Endothelial cell of umbilical vein (primary cell): ENCODE measurements at regions of chr5 and their contacts with region 1.

Region 1: GRCh38 chr5:75717082-75717922 is at the start of gene POC5:
- DNase-seq: peak; percentile 98
- H3K4me3 ChIP-seq: peak within 1 kb of the TSS; percentile 49 to 88 (median 86)
- H3K27ac ChIP-seq: peak within 1 kb of the TSS; percentile 53
- H3K4me1 ChIP-seq: peaks cover 7% of the 10 kb centered on the region
- H3K27me3 ChIP-seq: peaks cover 8 to 9% of the 10 kb centered on the region in 2 experiments
- CTCF ChIP-seq: no peak
- POLR2A ChIP-seq: no peak
- total RNA-seq, gene POC5: 7.8 and 8.3 TPM in 2 replicates

Region 2: GRCh38 chr5:75524071-75524470 is 193.2 kb before region 1 on chr5:
- CTCF ChIA-PET with region 1: no interaction called
- POLR2A ChIA-PET with region 1: no interaction called
- dilution Hi-C with region 1: no loop called
- intact Hi-C with region 1: no loop called
- DNase-seq: no peak
- H3K4me3 ChIP-seq: no peak overlapping the region
- H3K27ac ChIP-seq: no peak overlapping the region
- H3K4me1 ChIP-seq: no peaks in the 10 kb centered on the region
- H3K27me3 ChIP-seq: no peaks in the 10 kb centered on the region
- CTCF ChIP-seq: no peak
- POLR2A ChIP-seq: no peak

Region 3: DNA sequence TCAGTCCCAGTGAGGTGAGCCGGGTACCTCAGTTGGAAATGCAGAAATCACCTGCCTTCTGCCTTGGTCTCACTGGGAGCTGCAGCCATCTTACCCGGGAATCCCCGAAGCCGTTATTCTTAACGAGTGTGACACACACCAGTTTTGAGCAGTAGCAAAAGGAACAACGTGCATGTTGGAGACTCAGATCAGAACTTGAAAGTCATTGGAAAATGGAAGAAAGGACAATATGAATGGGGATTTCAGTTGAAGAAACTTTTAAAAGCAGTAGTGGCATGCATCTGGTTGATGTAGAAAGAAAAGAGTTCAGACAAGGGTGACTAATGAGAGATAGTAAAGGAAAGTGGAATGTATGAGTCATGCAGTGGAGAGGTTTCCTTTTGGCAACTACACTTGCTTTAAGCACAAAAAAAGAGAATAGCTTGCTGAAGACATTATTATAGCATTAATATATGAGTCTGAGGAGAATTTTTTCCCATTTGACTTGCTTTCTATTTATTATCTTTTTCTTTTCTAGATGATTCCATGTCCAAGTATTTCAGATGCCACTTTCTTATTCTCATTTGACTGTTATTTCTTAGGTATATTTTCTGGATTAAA is 150.5 kb before region 1 on chr5:
- CTCF ChIA-PET with region 1: no interaction called
- POLR2A ChIA-PET with region 1: no interaction called
- dilution Hi-C with region 1: no loop called
- intact Hi-C with region 1: loop called (anchors 1 kb)
- DNase-seq: peak; percentile 96
- H3K4me3 ChIP-seq: peak overlapping the region in 2 of 3 experiments; percentile 10 to 35
- H3K27ac ChIP-seq: peak overlapping the region; percentile 90
- H3K4me1 ChIP-seq: peaks cover 32% of the 10 kb centered on the region
- H3K27me3 ChIP-seq: no peaks in the 10 kb centered on the region
- CTCF ChIP-seq: no peak
- POLR2A ChIP-seq: no peak